GM12878 (cell line): ENCODE measurements at regions of chr9 and their contacts with region 1.

Region 1: DNA sequence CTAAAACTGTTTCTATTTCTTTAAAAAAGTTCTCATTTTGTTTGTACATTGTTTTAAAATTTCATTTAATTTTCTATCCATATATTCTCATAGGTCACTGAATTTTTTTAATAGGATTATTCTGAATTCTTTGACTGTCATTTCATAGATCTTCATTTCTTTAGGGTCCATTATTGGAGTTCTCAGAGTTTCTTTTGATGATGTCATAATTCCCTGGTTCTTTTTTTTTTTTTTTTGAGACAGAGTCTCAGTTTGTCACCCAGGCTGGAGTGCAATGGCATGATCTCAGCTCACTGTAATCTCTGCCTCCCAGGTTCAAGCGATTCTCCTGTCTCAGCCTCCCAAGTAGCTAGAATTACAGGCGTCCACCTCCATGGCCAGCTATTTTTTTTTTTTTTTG is 89.9 kb downstream of the DMRT2 start:
- DNase-seq: no peak
- ATAC-seq: no peak
- H3K4me3 ChIP-seq: no peak overlapping the region
- H3K27ac ChIP-seq: no peak overlapping the region
- H3K4me1 ChIP-seq: no peaks in the 10 kb centered on the region
- H3K27me3 ChIP-seq: no peaks in the 10 kb centered on the region
- CTCF ChIP-seq: no peak
- EP300 ChIP-seq: no peak
- POLR2A ChIP-seq: no peak
- RAD21 ChIP-seq: no peak

Region 2: DNA sequence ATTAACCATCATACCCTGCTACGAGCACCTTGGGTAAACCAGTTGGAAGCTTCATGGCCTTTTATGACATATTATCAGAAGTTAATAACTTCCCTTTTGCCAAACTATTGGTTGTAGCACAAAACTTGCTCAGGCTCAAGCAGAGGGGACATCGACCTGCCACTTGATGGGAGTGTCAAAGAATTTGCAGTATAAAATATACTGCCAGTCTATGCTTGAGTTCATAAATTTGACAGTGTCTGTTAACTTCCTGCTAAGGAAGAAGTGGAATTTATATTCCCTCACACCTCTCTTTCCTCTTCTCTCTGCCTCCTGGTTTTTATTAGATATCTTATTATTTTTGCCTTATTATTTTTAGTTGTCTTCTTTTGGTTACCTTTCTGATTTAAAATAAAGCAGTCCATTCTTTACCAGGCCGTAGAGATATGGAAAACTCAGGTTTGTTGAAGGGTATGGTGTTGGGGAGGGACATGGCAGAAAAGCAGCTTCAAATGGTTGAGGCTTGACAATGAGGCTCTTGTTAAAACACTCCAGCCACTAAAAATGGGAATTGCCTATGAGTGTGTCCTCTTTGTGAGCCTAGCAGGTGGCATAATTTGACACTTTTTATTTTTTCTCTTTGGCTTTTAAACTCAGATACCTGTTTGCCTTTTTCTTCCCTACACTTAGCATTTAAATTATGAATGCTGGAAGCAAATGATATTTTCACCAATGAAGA is 627.3 kb before region 1 on chr9:
- CTCF ChIA-PET with region 1: no interaction called
- POLR2A ChIA-PET with region 1: no interaction called
- RAD21 ChIA-PET with region 1: no interaction called
- SMC1A ChIA-PET with region 1: no interaction called
- in situ Hi-C with region 1: no loop called
- intact Hi-C with region 1: no loop called
- DNase-seq: no peak
- ATAC-seq: no peak
- H3K4me3 ChIP-seq: no peak overlapping the region
- H3K27ac ChIP-seq: no peak overlapping the region
- H3K4me1 ChIP-seq: no peaks in the 10 kb centered on the region
- H3K27me3 ChIP-seq: no peaks in the 10 kb centered on the region; a peak in 1 of 4 replicates
- CTCF ChIP-seq: no peak
- EP300 ChIP-seq: no peak
- POLR2A ChIP-seq: no peak
- RAD21 ChIP-seq: no peak

Region 3: GRCh38 chr9:1125741-1126140 is 14.3 kb before region 1 on chr9:
- CTCF ChIA-PET with region 1: interaction called, 3 read pairs
- POLR2A ChIA-PET with region 1: interaction called, 3 read pairs
- RAD21 ChIA-PET with region 1: interaction called, 3 read pairs
- SMC1A ChIA-PET with region 1: interaction called, 12 read pairs
- in situ Hi-C with region 1: no loop called
- intact Hi-C with region 1: no loop called
- DNase-seq: no peak
- ATAC-seq: no peak
- H3K4me3 ChIP-seq: no peak overlapping the region
- H3K27ac ChIP-seq: no peak overlapping the region
- H3K4me1 ChIP-seq: no peaks in the 10 kb centered on the region
- H3K27me3 ChIP-seq: no peaks in the 10 kb centered on the region
- CTCF ChIP-seq: no peak
- EP300 ChIP-seq: no peak
- POLR2A ChIP-seq: no peak
- RAD21 ChIP-seq: no peak

Region 4: GRCh38 chr9:1156801-1157550 is 16.9 kb after region 1 on chr9:
- CTCF ChIA-PET with region 1: interaction called, 4 read pairs
- POLR2A ChIA-PET with region 1: no interaction called
- RAD21 ChIA-PET with region 1: interaction called, 3 read pairs
- SMC1A ChIA-PET with region 1: interaction called, 10 read pairs
- in situ Hi-C with region 1: no loop called
- intact Hi-C with region 1: no loop called
- DNase-seq: no peak
- ATAC-seq: peak; percentile 68
- H3K4me3 ChIP-seq: no peak overlapping the region
- H3K27ac ChIP-seq: no peak overlapping the region
- H3K4me1 ChIP-seq: no peaks in the 10 kb centered on the region
- H3K27me3 ChIP-seq: no peaks in the 10 kb centered on the region
- CTCF ChIP-seq: no peak
- EP300 ChIP-seq: no peak
- POLR2A ChIP-seq: no peak
- RAD21 ChIP-seq: no peak

Region 5: GRCh38 chr9:1804128-1804865 is 664.2 kb after region 1 on chr9:
- CTCF ChIA-PET with region 1: no interaction called
- POLR2A ChIA-PET with region 1: no interaction called
- RAD21 ChIA-PET with region 1: no interaction called
- SMC1A ChIA-PET with region 1: no interaction called
- in situ Hi-C with region 1: no loop called
- intact Hi-C with region 1: no loop called
- DNase-seq: no peak
- ATAC-seq: no peak
- H3K4me3 ChIP-seq: no peak overlapping the region
- H3K27ac ChIP-seq: no peak overlapping the region
- H3K4me1 ChIP-seq: no peaks in the 10 kb centered on the region
- H3K27me3 ChIP-seq: no peaks in the 10 kb centered on the region
- CTCF ChIP-seq: no peak
- EP300 ChIP-seq: no peak
- POLR2A ChIP-seq: no peak
- RAD21 ChIP-seq: no peak